IMR-90 (cell line): ENCODE measurements at regions of chr13 and their contacts with region 1.

Region 1: DNA sequence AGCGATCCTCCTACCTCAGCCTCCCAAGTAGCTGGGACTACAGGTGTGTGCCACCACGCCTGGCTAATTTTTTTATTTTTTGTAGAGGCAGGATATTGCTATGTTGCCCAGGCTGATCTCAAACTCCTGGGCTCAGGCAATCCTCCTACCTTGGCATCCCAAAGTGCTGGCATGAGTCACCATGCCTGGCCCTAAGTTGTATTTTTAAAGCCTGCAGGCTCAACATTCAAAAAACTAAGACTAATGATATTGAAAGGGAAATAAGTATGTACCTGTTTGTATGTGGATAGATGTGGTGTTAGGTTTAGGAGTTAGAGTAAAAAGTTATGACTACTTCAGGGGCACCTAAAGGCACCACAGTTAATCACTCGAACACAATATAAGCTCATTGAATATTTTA is 5.4 kb upstream of the IPO5 start:
- DNase-seq: peak; percentile 35
- ATAC-seq: no peak
- H3K4me3 ChIP-seq: no peak overlapping the region
- H3K27ac ChIP-seq: peak overlapping the region; percentile 68
- H3K4me1 ChIP-seq: peaks cover 14% of the 10 kb centered on the region
- H3K27me3 ChIP-seq: no peaks in the 10 kb centered on the region
- CTCF ChIP-seq: no peak
- POLR2A ChIP-seq: no peak
- RAD21 ChIP-seq: no peak

Region 2: DNA sequence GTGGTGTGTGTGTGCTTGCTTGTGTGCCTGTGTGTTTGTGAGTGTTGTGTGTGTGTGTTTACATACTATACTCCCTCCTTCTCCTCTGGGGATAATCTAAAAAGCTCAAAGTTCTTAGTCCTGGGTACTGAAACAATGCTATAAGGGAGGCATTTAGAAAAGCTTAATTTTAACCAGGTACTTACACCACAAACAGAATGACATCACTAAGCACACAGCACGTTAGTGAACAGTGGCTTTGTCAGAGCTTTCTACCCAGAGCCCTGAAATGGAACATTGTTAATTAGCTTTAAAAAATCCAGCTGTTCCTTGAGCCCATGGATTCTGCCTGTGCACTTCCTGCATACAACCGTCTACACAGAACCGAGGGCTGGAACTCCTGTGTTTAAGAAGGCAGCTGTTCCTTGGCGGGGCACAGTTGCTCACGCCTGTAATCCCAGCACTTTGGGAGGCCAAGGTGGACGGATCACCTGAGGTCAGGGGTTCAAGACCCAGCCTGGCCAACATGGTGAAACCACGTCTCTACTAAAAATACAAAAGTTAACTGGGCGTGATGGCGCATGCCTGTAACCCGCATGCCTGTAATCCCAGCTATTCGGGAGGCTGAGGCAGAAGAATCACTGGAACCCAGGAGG is 298.6 kb after region 1 on chr13:
- CTCF ChIA-PET with region 1: no interaction called
- POLR2A ChIA-PET with region 1: interaction called, 18 read pairs
- dilution Hi-C with region 1: no loop called
- in situ Hi-C with region 1: no loop called
- intact Hi-C with region 1: no loop called
- DNase-seq: peak; percentile 16
- ATAC-seq: no peak
- H3K4me3 ChIP-seq: no peak overlapping the region
- H3K27ac ChIP-seq: no peak overlapping the region
- H3K4me1 ChIP-seq: no peaks in the 10 kb centered on the region
- H3K27me3 ChIP-seq: no peaks in the 10 kb centered on the region
- CTCF ChIP-seq: no peak
- POLR2A ChIP-seq: no peak
- RAD21 ChIP-seq: no peak